ENCODE measurements at regions of chr6 and their contacts with region 1.

Region 1: GRCh38 chr6:41027799-41028628 is 11.0 kb downstream of the UNC5CL start:
- DNase-seq: peak; percentile 84
- H3K4me3 Mint-ChIP-seq: peak overlapping the region; percentile 77
- H3K27ac Mint-ChIP-seq: peak overlapping the region; percentile 77
- H3K4me1 Mint-ChIP-seq: peaks cover 24% of the 10 kb centered on the region
- H3K27me3 Mint-ChIP-seq: no peaks in the 10 kb centered on the region

Region 2: GRCh38 chr6:40852779-40853373 is 175.1 kb before region 1 on chr6:
- CTCF ChIA-PET with region 1: no interaction called
- POLR2A ChIA-PET with region 1: no interaction called
- DNase-seq: no peak
- H3K4me3 Mint-ChIP-seq: no peak overlapping the region
- H3K27ac Mint-ChIP-seq: no peak overlapping the region
- H3K4me1 Mint-ChIP-seq: peaks cover 4% of the 10 kb centered on the region
- H3K27me3 Mint-ChIP-seq: peaks cover 2% of the 10 kb centered on the region

Region 3: DNA sequence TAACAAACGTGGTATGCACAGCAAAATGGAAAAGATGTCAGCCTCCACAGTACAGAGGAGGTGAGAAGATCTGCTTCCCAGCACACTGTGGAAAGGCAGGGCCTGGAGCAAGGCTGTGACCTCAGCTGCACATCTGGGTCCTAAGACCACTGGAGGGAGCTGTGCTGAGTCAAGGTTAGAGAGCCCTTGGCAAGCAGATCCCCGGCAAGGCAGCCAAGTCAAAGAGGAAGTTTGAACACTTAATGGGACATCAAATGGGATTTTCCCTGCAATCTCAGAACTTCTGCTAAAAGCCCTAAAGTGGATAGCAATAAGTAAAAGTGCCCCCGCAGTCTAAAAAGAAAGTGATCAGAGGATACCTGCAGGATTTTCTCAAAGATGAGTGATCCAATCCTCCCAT is 28.4 kb before region 1 on chr6:
- CTCF ChIA-PET with region 1: interaction called, 11 read pairs
- POLR2A ChIA-PET with region 1: interaction called, 7 read pairs
- DNase-seq: no peak
- H3K4me3 Mint-ChIP-seq: no peak overlapping the region
- H3K27ac Mint-ChIP-seq: no peak overlapping the region
- H3K4me1 Mint-ChIP-seq: no peaks in the 10 kb centered on the region
- H3K27me3 Mint-ChIP-seq: peaks cover 60% of the 10 kb centered on the region

Region 4: GRCh38 chr6:41017663-41018062 is 10.4 kb before region 1 on chr6:
- CTCF ChIA-PET with region 1: interaction called, 32 read pairs
- POLR2A ChIA-PET with region 1: interaction called, 5 read pairs
- DNase-seq: no peak
- H3K4me3 Mint-ChIP-seq: no peak overlapping the region
- H3K27ac Mint-ChIP-seq: no peak overlapping the region
- H3K4me1 Mint-ChIP-seq: no peaks in the 10 kb centered on the region
- H3K27me3 Mint-ChIP-seq: no peaks in the 10 kb centered on the region

Region 5: DNA sequence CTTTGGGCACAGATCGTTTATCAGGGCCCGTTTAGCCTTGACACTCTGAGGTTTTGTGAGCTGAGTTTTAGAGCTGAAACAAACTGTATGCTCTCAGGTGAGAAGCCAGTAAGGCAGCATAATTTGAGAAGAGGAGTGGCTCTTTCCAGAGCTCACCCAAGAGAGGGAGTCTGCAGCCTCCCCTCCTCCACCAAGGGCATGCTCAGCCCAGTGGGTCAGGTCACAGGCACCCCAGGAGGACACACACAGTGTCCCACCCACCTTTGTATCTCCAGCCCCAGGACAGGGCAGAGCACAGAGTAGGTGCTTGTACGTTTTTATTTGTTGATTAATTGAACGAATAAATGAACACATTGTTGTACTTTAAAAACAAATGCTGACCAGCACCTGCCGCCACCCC is 17.6 kb after region 1 on chr6:
- CTCF ChIA-PET with region 1: interaction called, 68 read pairs
- POLR2A ChIA-PET with region 1: interaction called, 7 read pairs
- DNase-seq: no peak
- H3K4me3 Mint-ChIP-seq: no peak overlapping the region
- H3K27ac Mint-ChIP-seq: no peak overlapping the region
- H3K4me1 Mint-ChIP-seq: peaks cover 3% of the 10 kb centered on the region
- H3K27me3 Mint-ChIP-seq: no peaks in the 10 kb centered on the region

Region 6: GRCh38 chr6:41072676-41073623 is 44.9 kb after region 1 on chr6 and contains the start of gene NFYA:
- CTCF ChIA-PET with region 1: interaction called, 47 read pairs
- POLR2A ChIA-PET with region 1: interaction called, 51 read pairs
- DNase-seq: peak; percentile 100
- H3K4me3 Mint-ChIP-seq: peak within 1 kb of the TSS; percentile 93
- H3K27ac Mint-ChIP-seq: peak within 1 kb of the TSS; percentile 99
- H3K4me1 Mint-ChIP-seq: peaks cover 66% of the 10 kb centered on the region
- H3K27me3 Mint-ChIP-seq: no peaks in the 10 kb centered on the region
- total RNA-seq, gene NFYA: 26.2 to 29.8 TPM

Region 7: DNA sequence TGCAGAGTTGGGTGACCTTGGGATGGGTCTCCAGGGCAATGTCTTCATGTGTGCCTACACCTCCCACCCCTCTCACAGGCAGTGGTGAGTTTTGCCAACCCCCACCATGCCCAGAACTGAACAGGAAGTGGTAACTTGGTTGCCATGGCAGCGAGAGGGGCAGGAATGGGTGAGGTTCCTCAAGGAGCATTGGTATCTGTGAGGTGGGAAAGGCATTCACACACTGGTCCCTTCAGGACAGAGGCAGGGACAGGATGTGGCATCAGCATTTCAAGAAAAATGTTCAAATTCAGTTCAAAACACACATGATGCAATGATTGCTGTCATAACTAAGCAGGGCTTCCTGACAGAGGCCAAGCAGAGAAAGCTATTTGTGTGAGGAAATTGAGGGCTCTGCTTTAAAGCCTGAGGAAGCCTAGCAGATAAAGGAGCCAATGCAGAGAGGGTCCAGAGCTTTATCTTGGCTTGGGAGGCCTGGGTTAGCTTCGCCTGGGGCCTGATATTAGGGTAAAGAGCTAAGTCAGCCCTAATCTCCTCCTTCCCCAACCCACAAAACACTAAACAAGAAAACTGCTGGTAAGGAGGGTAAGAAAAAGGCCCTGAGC is 172.4 kb after region 1 on chr6:
- CTCF ChIA-PET with region 1: interaction called, 3 read pairs
- POLR2A ChIA-PET with region 1: interaction called, 12 read pairs
- DNase-seq: peak; percentile 77
- H3K4me3 Mint-ChIP-seq: peak overlapping the region; percentile 67
- H3K27ac Mint-ChIP-seq: peak overlapping the region; percentile 95
- H3K4me1 Mint-ChIP-seq: peaks cover 67% of the 10 kb centered on the region
- H3K27me3 Mint-ChIP-seq: no peaks in the 10 kb centered on the region

Region 8: DNA sequence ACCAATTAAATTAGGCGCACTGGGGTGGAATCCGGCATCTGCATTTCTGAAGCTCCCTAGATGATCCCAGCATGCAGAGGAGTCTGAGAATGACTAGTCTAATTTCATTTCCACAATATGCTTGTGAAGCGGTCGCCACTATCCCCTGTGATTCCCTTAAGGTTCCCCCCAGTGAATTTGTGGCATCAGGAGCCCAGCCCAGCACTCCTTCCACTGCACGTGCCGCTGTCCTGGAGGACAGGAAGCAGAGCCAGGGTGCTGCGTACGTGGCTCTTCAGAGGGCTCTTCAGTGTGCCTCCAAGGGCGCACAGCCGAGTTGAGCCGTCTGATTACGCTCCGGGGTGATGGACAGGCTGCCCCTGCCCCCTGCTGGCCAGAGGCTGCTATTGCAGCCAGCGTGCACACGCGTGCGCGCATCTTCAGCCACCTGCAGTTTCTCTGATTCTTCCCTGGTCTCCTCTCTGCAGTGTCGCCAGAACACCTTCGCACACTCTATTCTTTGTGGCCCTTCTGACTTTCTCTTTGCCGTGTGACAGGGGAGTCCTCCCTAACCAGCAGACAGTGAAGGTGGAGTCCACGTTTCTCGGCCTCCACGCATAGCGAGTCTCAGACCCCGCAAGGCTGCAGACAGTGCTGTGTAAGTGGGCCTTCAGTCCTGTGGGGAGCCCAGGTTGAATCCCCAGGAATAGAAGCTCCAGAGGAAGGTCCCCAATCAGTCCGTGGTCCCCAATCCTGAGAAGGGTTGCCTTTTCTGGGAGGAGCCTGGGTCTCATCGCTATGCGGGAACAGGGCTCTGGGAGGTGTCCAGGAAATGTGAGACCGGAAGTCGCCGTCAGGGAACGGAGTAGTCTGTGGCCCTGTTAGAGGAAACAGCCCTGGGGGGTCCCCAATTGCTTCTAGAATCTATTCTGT is 290.9 kb after region 1 on chr6:
- CTCF ChIA-PET with region 1: no interaction called
- POLR2A ChIA-PET with region 1: no interaction called
- DNase-seq: peak; percentile 85
- H3K4me3 Mint-ChIP-seq: no peak overlapping the region
- H3K27ac Mint-ChIP-seq: no peak overlapping the region
- H3K4me1 Mint-ChIP-seq: peaks cover 20% of the 10 kb centered on the region
- H3K27me3 Mint-ChIP-seq: peaks cover 31% of the 10 kb centered on the region

Measured in activated CD4-positive, alpha-beta memory T cell treated with anti-CD3 and anti-CD28 coated beads, Interleukin-2, amount 10 ng/mL, durations not matched to agents 7 days and 5 days (primary cell).